Activated CD4-positive, alpha-beta memory T cell treated with anti-CD3 and anti-CD28 coated beads, Interleukin-2, amount 10 ng/mL, durations not matched to agents 7 days and 5 days (primary cell): ENCODE measurements at regions of chr3 and their contacts with region 1.

Region 1: DNA sequence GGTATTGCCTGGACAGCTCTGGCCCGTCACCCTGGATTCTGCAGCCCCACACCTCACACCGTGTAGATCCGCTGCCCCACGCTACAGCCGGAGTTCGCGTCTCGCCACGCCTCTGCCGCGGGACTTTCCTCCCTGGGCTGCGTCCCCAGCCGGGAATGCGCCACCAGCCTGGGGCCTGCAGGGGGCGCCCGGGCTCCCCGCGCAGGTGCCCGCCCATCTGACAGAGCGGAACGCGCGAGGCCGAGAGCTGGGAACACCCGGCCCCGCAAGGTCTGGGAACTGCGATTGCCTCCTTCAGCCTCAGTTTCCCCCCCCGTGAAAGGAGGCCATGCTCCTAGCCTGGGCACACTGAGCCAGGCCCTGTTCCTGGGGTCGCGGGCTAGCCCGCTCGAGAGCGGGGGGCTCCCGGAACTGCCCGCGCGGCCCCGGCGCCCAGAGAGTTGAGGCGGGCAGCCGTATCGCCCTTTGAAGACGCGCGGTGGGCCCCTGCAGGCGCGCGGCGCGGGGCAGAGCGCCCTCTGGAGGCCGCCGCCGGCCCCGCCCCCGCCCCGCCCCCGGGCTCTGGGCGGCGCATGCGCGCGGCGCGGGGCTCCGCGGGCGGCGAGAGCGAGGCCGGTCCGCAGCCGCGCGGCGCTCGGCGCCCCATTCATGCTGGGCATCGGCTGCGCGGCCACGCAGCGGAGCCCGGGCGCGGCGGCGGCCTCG is at the start of gene PLXNA1:
- DNase-seq: peak; percentile 88
- H3K4me3 Mint-ChIP-seq: peak within 1 kb of the TSS; percentile 76
- H3K27ac Mint-ChIP-seq: peak within 1 kb of the TSS; percentile 55
- H3K4me1 Mint-ChIP-seq: peaks cover 21% of the 10 kb centered on the region
- H3K27me3 Mint-ChIP-seq: peaks cover 9% of the 10 kb centered on the region
- total RNA-seq, gene PLXNA1: 6.5 to 7.4 TPM

Region 2: DNA sequence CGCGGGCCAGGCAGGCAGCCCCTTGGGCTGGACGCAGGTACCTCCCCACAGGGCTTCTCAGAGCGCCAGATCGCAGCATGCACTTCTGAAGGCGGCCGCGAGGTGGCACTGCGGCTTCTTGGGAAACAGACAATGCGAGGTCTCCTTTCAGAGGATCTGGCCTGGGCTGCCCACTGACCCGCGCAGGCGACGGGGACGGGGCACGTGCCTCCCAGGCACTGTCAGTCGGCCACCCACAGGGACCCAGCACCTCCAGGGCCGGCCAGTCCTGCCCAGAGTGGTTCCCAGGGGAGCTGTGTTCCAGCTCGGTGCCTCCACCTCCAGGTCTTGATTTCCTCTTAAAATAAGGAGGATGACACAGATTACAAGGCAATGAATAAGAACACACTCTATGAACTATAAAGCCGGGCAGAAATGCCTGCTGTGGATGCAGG is 303.3 kb before region 1 on chr3:
- CTCF ChIA-PET with region 1: interaction called, 15 read pairs
- POLR2A ChIA-PET with region 1: no interaction called
- DNase-seq: peak; percentile 75
- H3K4me3 Mint-ChIP-seq: peak overlapping the region; percentile 5
- H3K27ac Mint-ChIP-seq: no peak overlapping the region
- H3K4me1 Mint-ChIP-seq: peaks cover 3% of the 10 kb centered on the region
- H3K27me3 Mint-ChIP-seq: peaks cover 21% of the 10 kb centered on the region

Region 3: GRCh38 chr3:127019449-127019848 is 36.8 kb after region 1 on chr3:
- CTCF ChIA-PET with region 1: no interaction called
- POLR2A ChIA-PET with region 1: no interaction called
- DNase-seq: no peak
- H3K4me3 Mint-ChIP-seq: no peak overlapping the region
- H3K27ac Mint-ChIP-seq: no peak overlapping the region
- H3K4me1 Mint-ChIP-seq: no peaks in the 10 kb centered on the region
- H3K27me3 Mint-ChIP-seq: no peaks in the 10 kb centered on the region

Region 4: DNA sequence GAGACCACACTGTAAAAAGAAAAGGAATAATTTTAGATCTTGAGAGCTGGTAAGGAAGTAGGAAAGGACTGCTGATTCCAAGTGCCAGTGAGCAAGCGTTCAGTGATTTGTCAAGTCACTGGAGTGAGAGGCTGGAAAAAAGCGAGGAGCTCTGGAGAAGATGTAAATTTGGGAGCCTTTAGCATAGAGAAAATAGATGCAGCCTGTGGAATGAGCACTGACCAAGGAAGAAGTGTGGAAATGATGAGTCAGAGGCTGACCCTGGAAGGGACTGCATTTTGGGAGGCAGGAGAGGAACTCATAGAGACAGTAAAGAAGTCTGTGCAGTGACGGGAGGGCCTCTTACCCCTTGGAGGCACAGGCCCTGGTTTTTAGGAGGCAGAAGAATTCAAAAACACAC is 673.0 kb after region 1 on chr3:
- CTCF ChIA-PET with region 1: no interaction called
- POLR2A ChIA-PET with region 1: no interaction called
- DNase-seq: no peak
- H3K4me3 Mint-ChIP-seq: no peak overlapping the region
- H3K27ac Mint-ChIP-seq: no peak overlapping the region
- H3K4me1 Mint-ChIP-seq: no peaks in the 10 kb centered on the region
- H3K27me3 Mint-ChIP-seq: peaks cover 5% of the 10 kb centered on the region